Cardiac septum (tissue), 1 donor: ENCODE measurements at regions of chr19 and their contacts with region 1.

Region 1: GRCh38 chr19:48152551-48152950 is 17.6 kb downstream of the LIG1 start:
- DNase-seq: no peak

Region 2: GRCh38 chr19:48110350-48110966 is 42.1 kb before region 1 on chr19 and contains the start of gene PLA2G4C:
- intact Hi-C with region 1: loop called (anchors 1 kb)
- DNase-seq: peak; percentile 93
- total RNA-seq, gene PLA2G4C: 61.8 TPM